WTC11 (cell line): ENCODE measurements at regions of chr16 and their contacts with region 1.

Region 1: GRCh38 chr16:10918294-10919002 is 23.8 kb downstream of the DEXI start:
- DNase-seq: peak; percentile 97
- ATAC-seq: peak; percentile 89
- H3K4me3 Mint-ChIP-seq: peak overlapping the region; percentile 18; the same call in 1 of the 2 replicates
- H3K27ac Mint-ChIP-seq: no peak overlapping the region
- H3K4me1 Mint-ChIP-seq: peaks cover 5% of the 10 kb centered on the region; the same call in 1 of the 2 replicates
- H3K27me3 Mint-ChIP-seq: no peaks in the 10 kb centered on the region
- CTCF ChIP-seq: peak; percentile 87

Region 2: DNA sequence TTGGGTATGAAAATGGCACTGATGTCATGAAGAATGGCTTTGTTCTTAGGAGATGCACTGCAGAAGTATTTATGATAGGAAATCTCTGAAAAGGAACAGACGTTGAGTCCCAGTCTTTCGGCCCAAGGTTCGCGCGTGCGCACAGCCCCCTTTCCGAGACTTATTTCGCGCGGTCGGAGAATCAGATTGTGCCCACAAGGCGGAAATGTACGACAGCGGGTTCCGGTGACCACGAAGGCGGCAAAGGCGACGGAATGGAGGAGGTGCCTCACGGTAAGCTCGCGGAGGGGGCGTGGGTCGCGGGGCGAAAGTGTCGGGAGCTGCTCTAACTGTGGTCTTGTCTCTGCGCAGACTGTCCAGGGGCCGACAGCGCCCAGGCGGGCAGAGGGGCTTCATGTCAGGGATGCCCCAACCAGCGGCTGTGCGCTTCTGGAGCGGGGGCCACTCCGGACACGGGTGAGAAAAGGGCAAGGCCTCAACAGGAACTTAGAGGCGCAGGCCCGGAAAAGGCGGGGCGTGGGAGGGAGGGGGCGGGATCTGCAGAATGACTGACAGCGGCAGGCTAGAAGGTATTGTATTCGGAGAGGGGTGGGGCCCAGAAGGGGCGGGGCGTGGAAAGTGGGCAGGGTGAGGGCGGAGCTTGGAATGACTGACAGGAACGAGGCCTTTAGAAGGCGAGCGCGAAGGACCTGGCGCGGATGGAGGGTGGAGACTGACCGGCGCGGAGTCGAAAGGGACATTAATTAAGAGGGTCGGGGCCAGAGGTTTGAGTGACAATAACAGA is 174.6 kb before region 1 on chr16 and contains the start of gene NUBP1:
- CTCF ChIA-PET with region 1: interaction called, 35 read pairs
- POLR2A ChIA-PET with region 1: no interaction called
- DNase-seq: peak; percentile 99
- ATAC-seq: peak; percentile 96
- H3K4me3 Mint-ChIP-seq: peak within 1 kb of the TSS; percentile 88
- H3K27ac Mint-ChIP-seq: peak within 1 kb of the TSS; percentile 97
- H3K4me1 Mint-ChIP-seq: peaks cover 11% of the 10 kb centered on the region
- H3K27me3 Mint-ChIP-seq: no peaks in the 10 kb centered on the region
- CTCF ChIP-seq: no peak
- total RNA-seq, gene NUBP1: 23.5 to 25.4 TPM (median 25.4 TPM) in 3 replicates

Region 3: DNA sequence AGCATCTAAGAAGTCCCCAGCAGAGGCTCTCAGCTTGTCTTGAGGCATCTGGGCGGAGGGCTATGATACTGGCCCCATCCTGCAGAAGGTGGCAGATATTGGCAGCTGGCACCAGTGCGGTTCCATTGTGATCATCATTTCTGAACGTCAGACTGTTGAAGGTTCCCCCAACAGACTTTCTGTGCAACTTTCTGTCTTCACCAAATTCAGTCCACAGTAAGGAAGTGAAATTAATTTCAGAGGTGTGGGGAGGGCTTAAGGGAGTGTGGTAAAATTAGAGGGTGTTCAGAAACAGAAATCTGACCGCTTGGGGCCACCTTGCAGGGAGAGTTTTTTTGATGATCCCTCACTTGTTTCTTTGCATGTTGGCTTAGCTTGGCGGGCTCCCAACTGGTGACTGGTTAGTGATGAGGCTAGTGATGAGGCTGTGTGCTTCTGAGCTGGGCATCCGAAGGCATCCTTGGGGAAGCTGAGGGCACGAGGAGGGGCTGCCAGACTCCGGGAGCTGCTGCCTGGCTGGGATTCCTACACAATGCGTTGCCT is 41.6 kb before region 1 on chr16 and contains the start of gene CIITA:
- CTCF ChIA-PET with region 1: interaction called, 45 read pairs
- POLR2A ChIA-PET with region 1: no interaction called
- DNase-seq: no peak
- ATAC-seq: peak; percentile 13
- H3K4me3 Mint-ChIP-seq: peak within 1 kb of the TSS; percentile 11; the same call in 1 of the 2 replicates
- H3K27ac Mint-ChIP-seq: no peak within 1 kb of the TSS
- H3K4me1 Mint-ChIP-seq: peaks cover 25% of the 10 kb centered on the region
- H3K27me3 Mint-ChIP-seq: peaks cover 39% of the 10 kb centered on the region
- CTCF ChIP-seq: no peak
- total RNA-seq, gene CIITA: 0.21 to 0.27 TPM (median 0.26 TPM) in 3 replicates

Region 4: GRCh38 chr16:10889855-10890254 is 28.6 kb before region 1 on chr16:
- CTCF ChIA-PET with region 1: interaction called, 21 read pairs
- POLR2A ChIA-PET with region 1: no interaction called
- DNase-seq: no peak
- ATAC-seq: no peak
- H3K4me3 Mint-ChIP-seq: no peak overlapping the region
- H3K27ac Mint-ChIP-seq: no peak overlapping the region
- H3K4me1 Mint-ChIP-seq: peaks cover under 1% of the 10 kb centered on the region
- H3K27me3 Mint-ChIP-seq: no peaks in the 10 kb centered on the region; the same call in 1 of the 2 replicates
- CTCF ChIP-seq: no peak

Region 5: DNA sequence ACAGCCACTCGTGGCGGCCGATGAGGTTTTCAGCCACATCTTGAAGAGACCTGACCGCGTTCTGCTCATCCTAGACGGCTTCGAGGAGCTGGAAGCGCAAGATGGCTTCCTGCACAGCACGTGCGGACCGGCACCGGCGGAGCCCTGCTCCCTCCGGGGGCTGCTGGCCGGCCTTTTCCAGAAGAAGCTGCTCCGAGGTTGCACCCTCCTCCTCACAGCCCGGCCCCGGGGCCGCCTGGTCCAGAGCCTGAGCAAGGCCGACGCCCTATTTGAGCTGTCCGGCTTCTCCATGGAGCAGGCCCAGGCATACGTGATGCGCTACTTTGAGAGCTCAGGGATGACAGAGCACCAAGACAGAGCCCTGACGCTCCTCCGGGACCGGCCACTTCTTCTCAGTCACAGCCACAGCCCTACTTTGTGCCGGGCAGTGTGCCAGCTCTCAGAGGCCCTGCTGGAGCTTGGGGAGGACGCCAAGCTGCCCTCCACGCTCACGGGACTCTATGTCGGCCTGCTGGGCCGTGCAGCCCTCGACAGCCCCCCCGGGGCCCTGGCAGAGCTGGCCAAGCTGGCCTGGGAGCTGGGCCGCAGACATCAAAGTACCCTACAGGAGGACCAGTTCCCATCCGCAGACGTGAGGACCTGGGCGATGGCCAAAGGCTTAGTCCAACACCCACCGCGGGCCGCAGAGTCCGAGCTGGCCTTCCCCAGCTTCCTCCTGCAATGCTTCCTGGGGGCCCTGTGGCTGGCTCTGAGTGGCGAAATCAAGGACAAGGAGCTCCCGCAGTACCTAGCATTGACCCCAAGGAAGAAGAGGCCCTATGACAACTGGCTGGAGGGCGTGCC is 11.3 kb before region 1 on chr16:
- CTCF ChIA-PET with region 1: interaction called, 36 read pairs
- POLR2A ChIA-PET with region 1: no interaction called
- DNase-seq: no peak
- ATAC-seq: peak; percentile 38
- H3K4me3 Mint-ChIP-seq: no peak overlapping the region
- H3K27ac Mint-ChIP-seq: no peak overlapping the region
- H3K4me1 Mint-ChIP-seq: no peaks in the 10 kb centered on the region
- H3K27me3 Mint-ChIP-seq: peaks cover 3% of the 10 kb centered on the region; the same call in 1 of the 2 replicates
- CTCF ChIP-seq: no peak

Region 6: DNA sequence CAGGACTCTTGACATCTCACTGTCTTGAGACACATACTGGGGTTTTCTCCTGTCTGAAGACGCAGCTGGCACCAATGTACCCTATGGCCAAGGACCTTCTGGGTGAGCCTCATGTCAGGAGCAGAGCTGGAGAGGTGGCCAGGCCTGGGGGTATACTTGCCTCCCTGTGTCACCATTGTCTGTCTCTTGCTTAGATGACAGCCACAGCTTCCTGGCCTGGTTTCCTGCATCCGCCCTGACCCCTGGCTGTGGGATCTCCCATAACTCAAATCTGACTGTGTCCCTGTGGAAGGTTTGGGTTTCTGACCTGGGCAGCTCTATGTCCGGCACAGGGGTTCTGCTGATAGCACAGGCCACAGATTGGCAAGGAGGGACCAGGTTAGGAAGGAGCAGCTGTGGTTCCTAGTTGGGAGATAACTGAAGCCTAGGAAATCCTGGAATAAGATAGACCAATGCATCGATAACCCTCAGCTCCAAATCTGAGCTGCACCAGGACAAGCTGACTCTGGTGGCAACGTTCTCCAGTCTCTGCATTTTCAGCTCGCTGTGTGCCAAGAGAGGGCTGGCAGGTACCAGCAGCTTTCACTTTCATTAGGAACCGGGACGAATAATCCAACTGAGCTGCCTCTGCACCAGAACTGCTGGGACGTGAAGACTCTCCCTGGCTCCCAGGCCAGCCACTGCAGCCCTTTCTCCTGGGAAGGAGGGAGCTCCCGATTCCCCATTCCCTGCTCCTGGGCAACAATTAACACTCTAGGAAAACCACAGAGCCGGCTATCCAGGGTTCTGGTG is 18.8 kb after region 1 on chr16:
- CTCF ChIA-PET with region 1: interaction called, 38 read pairs
- POLR2A ChIA-PET with region 1: interaction called, 3 read pairs
- DNase-seq: no peak
- ATAC-seq: no peak
- H3K4me3 Mint-ChIP-seq: no peak overlapping the region
- H3K27ac Mint-ChIP-seq: no peak overlapping the region
- H3K4me1 Mint-ChIP-seq: peaks cover 23% of the 10 kb centered on the region
- H3K27me3 Mint-ChIP-seq: no peaks in the 10 kb centered on the region
- CTCF ChIP-seq: no peak

Region 7: GRCh38 chr16:10949370-10949970 is 31.0 kb after region 1 on chr16:
- CTCF ChIA-PET with region 1: interaction called, 17 read pairs
- POLR2A ChIA-PET with region 1: no interaction called
- DNase-seq: peak; percentile 59
- ATAC-seq: peak; percentile 75
- H3K4me3 Mint-ChIP-seq: no peak overlapping the region
- H3K27ac Mint-ChIP-seq: peak overlapping the region; percentile 18
- H3K4me1 Mint-ChIP-seq: peaks cover 61% of the 10 kb centered on the region
- H3K27me3 Mint-ChIP-seq: no peaks in the 10 kb centered on the region
- CTCF ChIP-seq: no peak